Activated B cell treated with CpG ODN at 0.5 μM for 24 hours (primary cell): ENCODE measurements at regions of chr13 and their contacts with region 1.

Region 1: DNA sequence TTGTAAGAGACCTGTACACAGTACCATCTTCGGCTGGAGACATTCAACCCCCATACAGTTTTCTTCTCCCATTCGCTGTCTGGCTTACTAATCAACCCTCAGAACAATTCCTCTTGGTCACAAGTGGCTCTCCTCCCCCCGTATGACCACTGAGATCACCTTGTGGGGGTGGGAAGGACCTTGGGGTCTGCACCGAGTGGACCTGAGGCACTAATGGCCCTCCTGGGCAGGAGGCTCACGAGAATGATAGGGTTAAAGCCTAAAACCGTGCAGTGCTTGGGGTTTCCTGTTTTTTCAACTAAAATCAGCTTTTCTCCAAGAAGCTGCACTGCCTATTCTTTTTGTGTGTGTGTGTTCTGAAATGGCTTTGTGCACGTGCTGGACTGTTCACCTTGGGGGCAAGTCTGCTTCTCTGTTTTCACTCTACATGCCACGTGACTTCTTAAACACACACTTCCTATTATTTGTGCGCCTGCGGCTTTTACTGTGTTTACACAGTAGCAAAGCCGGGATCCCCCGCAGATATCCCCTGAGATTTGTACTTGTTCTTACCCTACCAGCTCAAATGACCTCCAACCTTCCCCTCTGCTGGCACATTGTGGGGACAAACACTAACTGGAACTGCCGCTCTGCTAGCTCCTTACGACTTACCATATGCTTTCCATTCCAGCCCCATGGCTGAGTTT is 12.3 kb downstream of the RBM26 start:
- DNase-seq: peak; percentile 47
- ATAC-seq: peak; percentile 93
- H3K4me3 Mint-ChIP-seq: peak overlapping the region; percentile 65
- H3K27ac Mint-ChIP-seq: peak overlapping the region; percentile 85
- H3K4me1 Mint-ChIP-seq: peaks cover 65% of the 10 kb centered on the region
- H3K27me3 Mint-ChIP-seq: no peaks in the 10 kb centered on the region
- CTCF ChIP-seq: no peak

Region 2: DNA sequence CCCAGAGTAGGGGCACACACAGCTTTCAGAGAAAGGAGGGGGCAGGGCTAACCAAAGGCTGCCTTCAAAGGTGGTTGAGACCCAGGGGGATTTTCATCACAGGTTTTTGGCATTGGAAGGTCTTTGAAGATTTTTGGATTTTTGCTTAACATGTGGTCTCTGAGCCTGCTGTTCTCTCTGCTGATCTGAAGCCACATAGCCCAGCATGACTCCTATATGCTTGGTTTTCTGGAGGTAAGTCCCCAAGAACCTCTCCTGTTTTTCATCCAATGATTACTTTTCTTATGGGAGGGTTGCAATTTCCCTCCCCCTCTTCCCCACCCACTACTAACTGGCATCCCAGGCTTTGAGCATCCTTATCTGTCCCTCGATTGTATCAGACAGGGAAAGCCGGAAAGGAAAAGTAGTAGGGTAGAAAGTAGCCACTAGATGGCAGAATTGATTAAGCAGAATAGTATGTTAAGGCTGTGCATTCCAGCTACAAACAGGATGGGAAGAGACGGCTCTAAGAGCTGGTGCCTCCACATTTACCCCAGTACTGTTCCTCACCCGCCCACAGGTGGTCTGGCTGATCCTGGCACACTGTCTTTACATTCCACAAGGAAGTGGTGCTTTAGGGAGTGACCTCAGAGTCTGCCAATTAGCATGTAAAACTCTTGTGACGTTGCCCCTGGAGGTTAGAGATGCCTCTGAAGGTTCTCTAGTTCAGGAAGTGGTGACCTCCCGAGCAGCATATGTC is 1256.1 kb before region 1 on chr13:
- CTCF ChIA-PET with region 1: no interaction called
- POLR2A ChIA-PET with region 1: no interaction called
- intact Hi-C with region 1: loop called (anchors 10 kb)
- DNase-seq: peak; percentile 18
- ATAC-seq: peak; percentile 71
- H3K4me3 Mint-ChIP-seq: peak overlapping the region; percentile 79
- H3K27ac Mint-ChIP-seq: no peak overlapping the region
- H3K4me1 Mint-ChIP-seq: peaks cover 5% of the 10 kb centered on the region
- H3K27me3 Mint-ChIP-seq: peaks cover 5% of the 10 kb centered on the region
- CTCF ChIP-seq: no peak

Region 3: GRCh38 chr13:78609464-78610205 is 784.1 kb before region 1 on chr13:
- CTCF ChIA-PET with region 1: no interaction called
- POLR2A ChIA-PET with region 1: no interaction called
- intact Hi-C with region 1: loop called (anchors 5 kb)
- DNase-seq: no peak
- ATAC-seq: peak; percentile 21
- H3K4me3 Mint-ChIP-seq: peak overlapping the region; percentile 84
- H3K27ac Mint-ChIP-seq: no peak overlapping the region
- H3K4me1 Mint-ChIP-seq: peaks cover 46% of the 10 kb centered on the region
- H3K27me3 Mint-ChIP-seq: peaks cover 55% of the 10 kb centered on the region
- CTCF ChIP-seq: no peak

Region 4: GRCh38 chr13:79353693-79354092 is 40.0 kb before region 1 on chr13:
- CTCF ChIA-PET with region 1: interaction called, 3 read pairs
- POLR2A ChIA-PET with region 1: no interaction called
- intact Hi-C with region 1: loop called (anchors 5 kb)
- DNase-seq: no peak
- ATAC-seq: no peak
- H3K4me3 Mint-ChIP-seq: no peak overlapping the region
- H3K27ac Mint-ChIP-seq: no peak overlapping the region
- H3K4me1 Mint-ChIP-seq: no peaks in the 10 kb centered on the region
- H3K27me3 Mint-ChIP-seq: no peaks in the 10 kb centered on the region
- CTCF ChIP-seq: no peak

Region 5: DNA sequence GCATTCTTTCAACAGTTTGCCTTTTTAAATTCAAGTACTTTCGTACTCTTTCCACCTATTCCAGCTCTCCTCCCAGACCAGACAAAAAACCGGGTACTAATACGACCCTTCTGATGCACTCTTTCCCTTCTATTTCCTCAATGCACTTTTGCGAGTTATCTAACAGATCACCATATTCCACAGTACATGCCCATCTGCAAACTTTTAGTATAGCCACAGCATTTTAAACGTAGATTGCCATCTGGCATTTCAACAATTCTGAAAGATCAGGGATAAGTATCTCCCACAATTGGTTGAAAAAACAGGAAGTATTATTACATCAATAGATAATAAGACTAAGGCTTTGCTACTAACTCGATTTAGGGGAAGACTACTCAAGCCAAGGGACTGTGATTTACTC is 19.1 kb before region 1 on chr13:
- CTCF ChIA-PET with region 1: interaction called, 7 read pairs
- POLR2A ChIA-PET with region 1: no interaction called
- intact Hi-C with region 1: loop called (anchors 2 kb)
- DNase-seq: no peak
- ATAC-seq: no peak
- H3K4me3 Mint-ChIP-seq: no peak overlapping the region
- H3K27ac Mint-ChIP-seq: no peak overlapping the region
- H3K4me1 Mint-ChIP-seq: peaks cover 2% of the 10 kb centered on the region
- H3K27me3 Mint-ChIP-seq: no peaks in the 10 kb centered on the region
- CTCF ChIP-seq: no peak

Region 6: DNA sequence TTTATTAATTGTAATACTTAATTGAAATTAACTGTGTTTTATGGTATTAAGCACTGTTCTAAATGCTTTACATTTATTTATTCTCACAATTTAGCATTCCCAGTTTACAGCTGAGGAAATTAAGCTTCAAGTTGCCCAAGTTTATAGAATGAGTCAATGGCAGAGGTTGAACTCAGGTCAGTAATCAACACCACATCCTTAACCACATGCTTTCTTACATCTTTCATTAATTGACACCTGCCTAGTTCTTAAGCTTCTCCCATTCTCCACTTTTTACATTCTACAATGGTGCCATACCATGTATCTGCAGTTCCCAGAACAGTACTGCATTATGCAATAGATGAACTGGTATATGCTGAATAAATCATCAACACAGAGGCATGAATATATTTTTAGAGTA is 24.0 kb after region 1 on chr13:
- CTCF ChIA-PET with region 1: no interaction called
- POLR2A ChIA-PET with region 1: no interaction called
- intact Hi-C with region 1: no loop called
- DNase-seq: no peak
- ATAC-seq: no peak
- H3K4me3 Mint-ChIP-seq: no peak overlapping the region
- H3K27ac Mint-ChIP-seq: no peak overlapping the region
- H3K4me1 Mint-ChIP-seq: no peaks in the 10 kb centered on the region
- H3K27me3 Mint-ChIP-seq: no peaks in the 10 kb centered on the region
- CTCF ChIP-seq: no peak

Region 7: DNA sequence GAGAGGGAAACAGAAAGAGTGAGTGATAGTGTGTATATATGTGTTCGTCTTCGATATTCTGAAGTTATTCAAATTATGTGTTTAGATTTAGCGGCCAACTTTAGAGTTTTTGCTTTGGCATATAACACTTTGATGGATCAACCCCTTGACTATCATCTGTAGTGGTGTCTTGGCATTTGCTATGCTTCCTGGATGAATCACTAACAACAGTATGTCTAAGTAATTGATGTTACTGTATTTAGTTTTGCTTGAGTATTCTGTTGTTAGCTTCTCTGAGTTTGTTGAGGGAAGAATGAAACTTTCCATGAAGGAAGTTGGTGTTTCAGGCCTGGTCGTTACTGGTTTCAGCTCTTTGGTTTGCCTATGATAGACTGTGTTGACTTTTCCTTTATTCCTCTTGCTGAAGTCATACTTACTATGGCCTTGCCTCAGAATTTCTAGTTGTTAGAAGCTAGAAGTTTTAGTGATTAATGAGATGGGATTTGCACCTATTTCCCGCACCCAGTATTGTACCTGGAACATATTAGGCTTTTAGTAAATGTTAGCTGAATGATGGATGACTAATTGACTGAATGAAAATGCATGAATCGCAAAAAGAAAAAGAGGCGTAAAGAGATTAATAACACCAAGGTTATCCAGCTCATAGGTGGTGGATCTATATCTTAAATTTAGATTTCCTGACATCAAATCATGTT is 108.0 kb after region 1 on chr13:
- CTCF ChIA-PET with region 1: no interaction called
- POLR2A ChIA-PET with region 1: no interaction called
- intact Hi-C with region 1: no loop called
- DNase-seq: no peak
- ATAC-seq: no peak
- H3K4me3 Mint-ChIP-seq: no peak overlapping the region
- H3K27ac Mint-ChIP-seq: no peak overlapping the region
- H3K4me1 Mint-ChIP-seq: no peaks in the 10 kb centered on the region
- H3K27me3 Mint-ChIP-seq: peaks cover 4% of the 10 kb centered on the region
- CTCF ChIP-seq: no peak